Heart right ventricle (tissue), 16 donors: ENCODE measurements at regions of chr19 and their contacts with region 1.

Region 1: DNA sequence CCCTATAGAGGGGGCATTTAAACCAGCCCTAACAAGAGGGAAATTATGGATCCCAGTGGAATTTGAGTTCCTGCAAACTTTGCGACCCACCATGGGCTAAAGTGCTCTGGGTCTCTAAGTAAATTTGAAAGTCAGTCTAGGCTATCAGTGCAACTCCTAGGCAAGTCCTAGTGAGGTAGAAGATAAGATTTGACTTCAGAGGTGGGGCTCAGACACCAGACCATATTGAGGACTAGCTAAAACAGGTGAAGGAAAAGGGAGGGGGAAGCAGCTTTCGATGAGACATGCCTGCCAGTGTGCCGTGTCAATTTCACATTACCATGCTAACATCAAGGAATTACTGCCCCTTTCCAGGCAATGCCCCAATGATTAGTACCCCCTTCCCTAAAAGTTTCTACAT is 38.4 kb downstream of the CD320 start:
- DNase-seq: no peak
- ATAC-seq: no peak
- H3K4me3 ChIP-seq: no peak overlapping the region
- H3K27ac ChIP-seq: peak overlapping the region in 1 of 10 donors; percentile 86
- H3K4me1 ChIP-seq: peaks cover 0 to 16% (median 5%) of the 10 kb centered on the region in 9 donors
- H3K27me3 ChIP-seq: no peaks in the 10 kb centered on the region
- CTCF ChIP-seq: no peak

Region 2: DNA sequence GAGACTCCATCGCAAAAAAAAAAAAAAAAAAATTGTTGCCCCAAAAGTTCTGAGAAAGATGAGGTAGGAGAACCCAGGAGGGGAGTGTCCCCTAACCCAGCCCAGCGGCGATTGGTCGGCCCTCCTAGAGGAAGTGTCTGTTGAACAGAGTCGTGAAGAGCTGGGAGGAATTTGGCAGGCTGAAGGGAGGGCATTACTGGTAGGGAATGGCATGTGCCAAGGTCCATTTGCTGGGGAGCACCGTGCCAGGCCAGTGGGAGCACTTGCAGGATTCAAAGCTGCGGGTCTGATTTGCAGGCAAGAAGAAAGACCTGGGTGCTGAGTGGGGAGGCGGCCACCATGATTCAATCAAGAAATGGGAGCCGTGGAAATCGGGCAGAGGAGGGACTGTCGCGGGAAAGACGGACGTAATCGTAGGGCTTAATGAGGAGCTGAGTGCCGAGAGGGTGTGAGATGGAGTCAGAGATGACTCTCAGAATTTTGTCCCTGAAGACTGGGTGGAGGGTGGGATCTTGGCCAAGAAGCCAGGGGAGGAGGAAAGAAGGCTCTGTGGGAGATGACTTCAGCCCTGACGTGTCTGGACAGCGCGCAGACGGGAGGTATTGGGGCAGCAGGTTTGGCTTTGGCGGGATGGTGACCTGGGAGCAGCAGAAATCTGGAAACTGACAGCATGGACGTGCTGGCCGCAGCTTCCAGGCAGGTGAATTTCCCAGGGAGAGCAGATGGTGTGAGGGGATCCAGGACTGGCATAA is 45.2 kb before region 1 on chr19:
- intact Hi-C with region 1: no loop called
- DNase-seq: peak; percentile 30
- ATAC-seq: peak; percentile 37 to 88 (median 72)
- H3K4me3 ChIP-seq: no peak overlapping the region
- H3K27ac ChIP-seq: no peak overlapping the region
- H3K4me1 ChIP-seq: peaks cover 0 to 14% (median 6%) of the 10 kb centered on the region in 9 donors
- H3K27me3 ChIP-seq: no peaks in the 10 kb centered on the region
- CTCF ChIP-seq: no peak

Region 3: DNA sequence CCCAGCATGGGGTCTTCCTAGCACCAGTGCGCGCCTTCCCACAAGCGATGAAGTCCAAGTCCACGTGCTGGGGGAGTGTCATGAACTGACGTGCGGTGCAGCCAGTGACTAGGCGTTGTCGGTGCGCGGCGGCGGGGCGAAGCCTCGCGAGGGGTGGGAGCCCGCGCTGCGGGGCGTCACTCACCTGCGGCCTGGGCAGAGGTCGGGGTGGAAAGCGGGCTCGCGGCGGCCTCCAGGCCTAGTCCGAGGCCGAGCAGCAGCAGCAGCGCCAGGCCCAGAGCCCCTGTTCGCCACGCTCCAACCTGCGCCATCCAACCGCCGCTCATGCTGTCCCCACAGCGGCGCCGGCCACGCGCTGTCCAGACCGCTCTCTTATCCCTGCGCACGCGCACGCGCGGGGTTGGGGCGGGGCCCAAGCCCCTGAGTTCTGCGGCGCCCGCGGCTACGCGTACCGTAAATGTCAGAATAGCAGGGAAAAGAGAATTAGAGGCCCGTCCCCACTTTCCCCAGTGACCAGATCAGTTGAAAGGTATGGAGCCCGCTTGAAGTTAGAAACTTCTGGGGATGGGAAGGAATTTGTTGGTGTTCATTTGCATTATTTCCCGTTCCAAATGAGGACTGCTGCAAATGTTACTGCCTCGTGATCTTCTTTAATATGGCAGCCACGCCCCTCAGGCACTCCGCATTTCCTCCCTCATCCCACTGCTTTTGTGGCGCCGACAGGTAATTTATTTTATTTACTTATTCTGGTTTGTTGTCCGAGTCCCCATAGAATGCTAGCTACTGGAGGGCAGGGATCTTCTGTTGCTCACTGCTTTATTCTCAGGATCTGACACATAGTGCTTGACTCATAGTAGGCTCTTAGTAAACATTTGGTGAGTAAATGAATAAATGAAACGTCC is 38.5 kb after region 1 on chr19 and contains the start of gene CD320:
- intact Hi-C with region 1: loop called in 2 of 10 experiments (anchors 5 to 10 kb)
- DNase-seq: peak; percentile 90 to 93
- ATAC-seq: peak; percentile 93 to 96 (median 94)
- H3K4me3 ChIP-seq: peak within 1 kb of the TSS; percentile 48 to 76 (median 63)
- H3K27ac ChIP-seq: peak within 1 kb of the TSS in 9 of 10 donors; percentile 33 to 83 (median 65)
- H3K4me1 ChIP-seq: peaks cover 9 to 56% (median 44%) of the 10 kb centered on the region in 9 donors
- H3K27me3 ChIP-seq: peaks cover 0 to 5% (median 0%) of the 10 kb centered on the region in 7 donors
- CTCF ChIP-seq: no peak
- total RNA-seq, gene CD320: 20.3 to 38.9 (median 26.0) TPM

Region 4: DNA sequence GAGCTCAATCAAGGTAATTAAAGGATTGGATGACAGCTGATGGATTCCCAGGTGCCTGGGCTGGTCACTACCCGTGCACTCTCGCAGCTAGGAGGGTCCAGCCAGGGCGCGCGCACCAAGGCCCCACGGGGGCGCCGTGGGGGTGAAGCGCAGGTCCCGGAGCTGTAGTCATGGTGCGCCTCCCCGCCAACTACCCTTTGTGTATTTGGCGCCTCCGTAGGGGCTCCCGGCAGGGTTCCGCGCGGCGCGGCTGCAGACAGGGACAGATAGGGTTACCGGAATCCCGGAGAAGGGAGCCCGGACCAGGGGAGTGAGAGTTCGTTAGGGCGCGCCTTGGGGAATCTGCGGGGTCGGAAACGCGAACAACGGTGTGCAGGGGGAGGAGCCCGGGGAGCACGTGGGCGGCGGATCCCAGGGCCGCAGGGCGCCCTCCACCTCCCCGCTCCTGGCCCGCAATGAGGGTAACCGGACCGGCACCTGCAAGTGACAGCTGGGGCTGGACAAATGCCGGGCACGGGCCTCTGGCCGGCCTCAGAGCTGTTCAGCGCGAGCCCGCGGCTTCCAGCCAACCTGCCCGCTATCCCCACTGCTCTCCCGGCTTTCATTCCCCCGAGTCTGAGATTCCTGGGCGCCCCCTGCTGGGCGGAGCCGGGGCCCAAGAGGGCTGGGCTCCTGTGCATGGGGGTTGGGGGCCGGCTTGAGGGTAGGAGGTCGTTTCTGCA is 236.1 kb after region 1 on chr19:
- intact Hi-C with region 1: loop called in 1 of 10 experiments (anchors 5 kb)
- DNase-seq: peak; percentile 78 to 86
- ATAC-seq: peak; percentile 85 to 92 (median 90)
- H3K4me3 ChIP-seq: peak overlapping the region; percentile 23 to 70 (median 62)
- H3K27ac ChIP-seq: peak overlapping the region in 8 of 10 donors; percentile 13 to 58 (median 35)
- H3K4me1 ChIP-seq: peaks cover 2 to 55% (median 14%) of the 10 kb centered on the region in 9 donors
- H3K27me3 ChIP-seq: no peaks in the 10 kb centered on the region
- CTCF ChIP-seq: peak; percentile 80 to 97 (median 89)